ENCODE measurements at regions of chr5 and their contacts with region 1.

Region 1: DNA sequence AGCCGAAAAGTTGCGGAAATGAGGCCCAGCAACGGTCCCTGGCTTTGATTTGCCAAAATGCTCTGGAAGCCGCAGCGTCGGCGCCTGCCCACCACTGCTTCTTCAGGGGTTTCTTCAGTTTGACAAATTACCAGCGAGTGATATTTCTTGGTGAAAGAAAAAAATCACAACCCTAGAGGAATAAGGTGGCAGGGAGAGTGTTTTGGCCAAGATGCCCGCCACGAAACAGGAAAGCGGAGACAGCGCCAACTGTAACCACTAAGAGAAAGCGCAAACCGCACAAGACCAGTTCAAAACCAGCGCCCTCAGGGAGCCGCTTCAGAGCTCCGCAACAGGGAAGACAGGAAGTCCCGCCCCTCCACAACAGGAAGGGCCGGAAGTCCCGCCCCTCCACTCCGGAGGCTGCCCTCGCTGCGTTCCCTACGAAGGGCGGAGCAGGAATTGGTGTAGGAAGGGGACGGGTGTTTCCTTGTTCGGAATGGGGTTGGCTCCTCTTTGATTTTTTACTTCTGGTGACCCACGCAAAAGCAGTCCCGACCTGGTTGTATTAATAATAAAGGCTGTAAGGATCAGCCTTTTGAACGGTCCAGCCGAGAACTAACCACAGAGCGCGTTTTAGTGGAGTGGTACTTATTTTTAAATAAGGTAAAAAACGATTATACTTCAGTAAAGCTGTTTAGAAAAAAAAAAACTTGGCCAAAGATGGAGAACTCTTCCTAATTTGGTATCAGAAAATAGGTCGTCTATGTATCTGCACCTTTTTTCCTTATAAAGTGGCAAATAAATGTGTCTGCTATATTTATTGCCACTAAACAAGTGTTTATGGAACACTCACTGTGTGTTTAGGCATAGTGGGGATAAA is at the start of gene C5orf34:
- DNase-seq: peak; percentile 92
- ATAC-seq: peak; percentile 96
- H3K4me3 Mint-ChIP-seq: peak within 1 kb of the TSS; percentile 95
- H3K27ac Mint-ChIP-seq: peak within 1 kb of the TSS; percentile 95
- H3K4me1 Mint-ChIP-seq: peaks cover 23% of the 10 kb centered on the region
- H3K27me3 Mint-ChIP-seq: no peaks in the 10 kb centered on the region
- CTCF ChIP-seq: no peak
- total RNA-seq, gene C5orf34: 4.4 and 4.7 TPM in 2 replicates

Region 2: DNA sequence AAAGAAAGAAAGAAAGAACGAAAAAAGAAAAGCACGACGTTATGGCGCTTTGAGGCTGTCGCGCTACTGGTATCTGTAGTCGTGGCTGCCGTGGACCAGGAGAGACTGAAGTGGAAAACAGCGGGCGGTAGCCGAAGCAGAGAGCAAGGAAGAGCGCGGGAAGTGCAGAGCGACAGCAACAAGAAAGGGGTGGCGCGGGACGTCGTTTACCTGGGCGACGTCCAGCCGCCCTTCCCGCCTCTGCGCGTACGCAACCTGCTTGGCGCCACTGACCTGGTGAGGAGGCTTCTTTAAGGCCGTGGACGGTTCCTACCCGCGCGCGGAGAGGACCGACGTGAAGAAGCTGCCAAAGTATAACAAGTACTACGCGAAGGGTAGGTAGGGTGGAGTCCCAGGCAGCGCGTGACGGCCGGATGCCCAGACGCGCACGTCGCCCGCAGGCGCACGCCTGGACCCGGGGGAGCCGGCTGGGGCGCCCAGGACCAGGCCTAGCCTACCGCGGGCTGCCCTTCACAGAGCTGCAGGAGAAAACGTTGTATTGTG is 118.2 kb before region 1 on chr5:
- CTCF ChIA-PET with region 1: no interaction called
- POLR2A ChIA-PET with region 1: interaction called, 4 read pairs
- intact Hi-C with region 1: loop called (anchors 1 kb)
- DNase-seq: peak; percentile 67
- ATAC-seq: peak; percentile 100
- H3K4me3 Mint-ChIP-seq: peak overlapping the region; percentile 99
- H3K27ac Mint-ChIP-seq: peak overlapping the region; percentile 96
- H3K4me1 Mint-ChIP-seq: peaks cover 20% of the 10 kb centered on the region
- H3K27me3 Mint-ChIP-seq: no peaks in the 10 kb centered on the region
- CTCF ChIP-seq: no peak

Region 3: DNA sequence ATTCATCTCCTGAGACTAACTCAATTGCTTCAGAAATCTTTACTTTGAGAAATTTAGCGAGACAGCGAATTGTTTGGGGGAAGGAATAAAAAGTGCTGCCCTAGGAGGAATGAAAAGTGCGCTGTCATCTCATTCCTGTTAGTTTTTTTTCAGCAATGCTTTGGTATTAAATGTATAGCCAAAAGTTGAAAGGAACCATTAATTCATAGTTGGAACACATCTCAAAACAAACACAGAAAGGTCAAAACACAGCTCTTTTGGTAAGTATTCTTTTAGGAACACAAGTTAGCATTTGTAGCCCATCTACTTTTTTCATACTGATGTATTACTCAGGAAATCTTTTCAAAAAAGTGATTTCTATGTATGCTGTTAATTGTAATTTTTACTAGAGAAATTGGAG is 197.0 kb after region 1 on chr5:
- CTCF ChIA-PET with region 1: no interaction called
- POLR2A ChIA-PET with region 1: no interaction called
- intact Hi-C with region 1: no loop called
- DNase-seq: no peak
- ATAC-seq: no peak
- H3K4me3 Mint-ChIP-seq: no peak overlapping the region
- H3K27ac Mint-ChIP-seq: no peak overlapping the region
- H3K4me1 Mint-ChIP-seq: no peaks in the 10 kb centered on the region
- H3K27me3 Mint-ChIP-seq: no peaks in the 10 kb centered on the region
- CTCF ChIP-seq: no peak

Measured in activated B cell treated with CpG ODN at 0.5 μM for 24 hours (primary cell).